Caco-2 (cell line): ENCODE measurements at regions of chr11 and their contacts with region 1.

Region 1: GRCh38 chr11:94623120-94623735 is 56.1 kb downstream of the PIWIL4 start:
- DNase-seq: peak; percentile 87 to 92
- H3K4me3 ChIP-seq: no peak overlapping the region
- H3K4me3 Mint-ChIP-seq: no peak overlapping the region
- H3K27ac Mint-ChIP-seq: no peak overlapping the region
- H3K4me1 ChIP-seq: no peaks in the 10 kb centered on the region
- H3K4me1 Mint-ChIP-seq: no peaks in the 10 kb centered on the region
- H3K27me3 ChIP-seq: no peaks in the 10 kb centered on the region
- H3K27me3 Mint-ChIP-seq: no peaks in the 10 kb centered on the region
- CTCF ChIP-seq: peak; percentile 99

Region 2: GRCh38 chr11:94077552-94078293 is 545.5 kb before region 1 on chr11:
- CTCF ChIA-PET with region 1: no interaction called
- POLR2A ChIA-PET with region 1: no interaction called
- intact Hi-C with region 1: no loop called
- DNase-seq: no peak
- H3K4me3 ChIP-seq: no peak overlapping the region
- H3K4me3 Mint-ChIP-seq: no peak overlapping the region
- H3K27ac Mint-ChIP-seq: no peak overlapping the region
- H3K4me1 ChIP-seq: peaks cover 15% of the 10 kb centered on the region
- H3K4me1 Mint-ChIP-seq: peaks cover 11% of the 10 kb centered on the region
- H3K27me3 ChIP-seq: no peaks in the 10 kb centered on the region
- H3K27me3 Mint-ChIP-seq: no peaks in the 10 kb centered on the region
- CTCF ChIP-seq: no peak

Region 3: DNA sequence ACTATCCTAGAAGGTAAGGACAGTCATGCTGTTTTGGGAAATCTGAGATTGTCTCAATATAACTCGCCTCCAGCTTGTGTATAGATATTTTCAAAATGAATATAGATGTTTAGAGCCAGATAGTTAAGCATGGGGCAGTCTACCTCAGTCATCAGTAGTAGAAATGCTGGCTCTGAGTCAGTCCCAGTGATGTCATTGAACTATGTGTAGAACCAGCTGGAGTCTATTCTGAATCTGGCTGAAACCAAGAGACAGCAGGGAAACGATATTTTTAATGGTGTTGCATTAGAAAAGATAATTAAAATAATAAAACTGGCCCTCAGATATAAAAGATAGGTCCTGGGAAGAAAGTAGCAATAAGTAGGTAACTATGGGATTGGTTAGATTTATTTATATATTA is 30.2 kb before region 1 on chr11:
- CTCF ChIA-PET with region 1: no interaction called
- POLR2A ChIA-PET with region 1: no interaction called
- intact Hi-C with region 1: no loop called
- DNase-seq: no peak
- H3K4me3 ChIP-seq: no peak overlapping the region
- H3K4me3 Mint-ChIP-seq: no peak overlapping the region
- H3K27ac Mint-ChIP-seq: no peak overlapping the region
- H3K4me1 ChIP-seq: peaks cover 22% of the 10 kb centered on the region
- H3K4me1 Mint-ChIP-seq: peaks cover 30% of the 10 kb centered on the region
- H3K27me3 ChIP-seq: no peaks in the 10 kb centered on the region
- H3K27me3 Mint-ChIP-seq: no peaks in the 10 kb centered on the region
- CTCF ChIP-seq: no peak

Region 4: DNA sequence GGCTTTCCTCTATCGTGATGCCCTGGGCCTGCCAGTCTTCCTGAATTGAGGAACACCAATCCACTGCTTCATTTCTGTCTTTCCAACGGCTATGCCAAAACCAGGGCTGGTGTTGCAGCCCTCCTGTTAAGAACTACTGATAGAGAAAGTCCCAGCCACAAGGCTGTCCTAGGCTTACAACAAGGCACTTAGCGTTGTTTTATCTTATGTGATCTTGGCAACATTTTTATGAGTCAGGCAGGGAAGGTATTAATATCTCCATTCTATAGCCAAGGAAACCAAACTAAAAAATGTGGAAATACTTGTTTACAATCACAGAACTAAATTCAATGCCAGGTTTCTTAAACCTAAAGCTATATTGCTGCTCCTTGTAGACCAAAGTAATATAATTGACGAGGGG is 55.0 kb after region 1 on chr11:
- CTCF ChIA-PET with region 1: interaction called, 10 read pairs
- POLR2A ChIA-PET with region 1: no interaction called
- intact Hi-C with region 1: no loop called
- DNase-seq: no peak
- H3K4me3 ChIP-seq: no peak overlapping the region
- H3K4me3 Mint-ChIP-seq: no peak overlapping the region
- H3K27ac Mint-ChIP-seq: peak overlapping the region; percentile 28
- H3K4me1 ChIP-seq: peaks cover 47% of the 10 kb centered on the region
- H3K4me1 Mint-ChIP-seq: peaks cover 43% of the 10 kb centered on the region
- H3K27me3 ChIP-seq: no peaks in the 10 kb centered on the region
- H3K27me3 Mint-ChIP-seq: no peaks in the 10 kb centered on the region
- CTCF ChIP-seq: no peak

Region 5: GRCh38 chr11:94747146-94748080 is 124.2 kb after region 1 on chr11:
- CTCF ChIA-PET with region 1: interaction called, 18 read pairs
- POLR2A ChIA-PET with region 1: no interaction called
- intact Hi-C with region 1: loop called (anchors 1 kb)
- DNase-seq: peak; percentile 61 to 83
- H3K4me3 ChIP-seq: no peak overlapping the region
- H3K4me3 Mint-ChIP-seq: peak overlapping the region; percentile 30
- H3K27ac Mint-ChIP-seq: peak overlapping the region; percentile 45
- H3K4me1 ChIP-seq: peaks cover 51% of the 10 kb centered on the region
- H3K4me1 Mint-ChIP-seq: peaks cover 47% of the 10 kb centered on the region
- H3K27me3 ChIP-seq: no peaks in the 10 kb centered on the region
- H3K27me3 Mint-ChIP-seq: no peaks in the 10 kb centered on the region
- CTCF ChIP-seq: no peak

Region 6: GRCh38 chr11:94804874-94805273 is 181.6 kb after region 1 on chr11:
- CTCF ChIA-PET with region 1: interaction called, 3 read pairs
- POLR2A ChIA-PET with region 1: no interaction called
- intact Hi-C with region 1: loop called (anchors 1 kb)
- DNase-seq: no peak
- H3K4me3 ChIP-seq: no peak overlapping the region
- H3K4me3 Mint-ChIP-seq: no peak overlapping the region
- H3K27ac Mint-ChIP-seq: no peak overlapping the region
- H3K4me1 ChIP-seq: 0 out of 2 replicates have a peak, but pooled peaks cover 3% of the 10 kb centered on the region
- H3K4me1 Mint-ChIP-seq: no peaks in the 10 kb centered on the region
- H3K27me3 ChIP-seq: no peaks in the 10 kb centered on the region
- H3K27me3 Mint-ChIP-seq: no peaks in the 10 kb centered on the region
- CTCF ChIP-seq: no peak

Region 7: DNA sequence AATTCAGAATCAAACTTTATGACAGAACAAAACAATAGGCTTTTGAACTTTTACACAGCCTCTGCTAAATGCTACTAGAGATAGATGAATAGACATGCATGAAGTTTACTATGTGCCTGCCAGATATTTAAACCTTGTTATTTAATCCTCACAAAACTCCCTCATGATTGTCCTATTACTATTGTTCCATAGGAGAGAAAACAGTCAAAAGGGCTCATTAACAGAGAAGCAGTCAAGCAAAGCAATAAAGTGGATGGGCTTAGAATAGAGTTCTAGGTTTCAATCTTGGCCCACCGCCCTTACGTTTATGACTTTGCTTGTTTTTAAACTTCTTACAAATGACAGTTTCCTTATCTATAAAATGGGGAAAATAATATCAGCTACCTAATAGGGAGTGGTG is 337.3 kb after region 1 on chr11:
- CTCF ChIA-PET with region 1: interaction called, 8 read pairs
- POLR2A ChIA-PET with region 1: no interaction called
- intact Hi-C with region 1: loop called (anchors 2 kb)
- DNase-seq: no peak
- H3K4me3 ChIP-seq: no peak overlapping the region
- H3K4me3 Mint-ChIP-seq: no peak overlapping the region
- H3K27ac Mint-ChIP-seq: no peak overlapping the region
- H3K4me1 ChIP-seq: no peaks in the 10 kb centered on the region
- H3K4me1 Mint-ChIP-seq: no peaks in the 10 kb centered on the region
- H3K27me3 ChIP-seq: no peaks in the 10 kb centered on the region
- H3K27me3 Mint-ChIP-seq: no peaks in the 10 kb centered on the region
- CTCF ChIP-seq: no peak

Region 8: DNA sequence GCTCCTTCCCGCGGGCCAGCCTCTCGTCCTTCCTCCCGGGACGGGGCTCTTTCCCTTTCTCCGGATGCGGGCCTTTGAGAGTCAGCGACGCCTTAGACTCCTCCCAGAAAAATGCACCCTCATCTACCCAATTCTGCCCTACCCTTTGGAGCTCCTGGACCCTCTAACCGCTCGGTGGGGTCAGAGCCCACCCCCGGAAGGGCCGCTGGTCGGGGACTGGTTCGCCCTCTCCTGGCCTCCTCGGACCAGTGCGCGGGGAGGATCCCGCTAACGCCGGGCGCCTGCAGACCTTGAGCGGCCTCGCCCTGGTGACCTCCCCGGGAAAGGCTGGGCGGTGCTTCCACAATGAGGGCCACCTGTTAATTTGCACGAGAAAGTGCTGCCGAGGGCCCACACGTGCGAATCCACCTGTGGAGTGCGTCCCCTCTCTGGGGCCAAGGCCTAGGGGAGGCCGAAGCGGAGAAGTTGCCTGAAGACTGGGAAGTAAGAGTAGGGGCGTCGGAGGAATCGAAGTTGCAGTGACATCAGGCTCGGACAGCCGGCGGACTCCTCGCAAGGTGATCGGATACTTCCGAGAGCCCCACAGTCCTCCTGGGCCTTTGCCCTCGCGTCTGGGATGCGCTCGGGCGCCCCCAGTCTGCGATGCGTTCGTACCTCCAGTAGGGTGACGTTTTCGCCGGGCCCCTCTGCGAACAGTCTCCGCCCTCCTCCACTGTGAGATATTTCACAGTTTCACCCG is 527.9 kb after region 1 on chr11:
- CTCF ChIA-PET with region 1: interaction called, 4 read pairs
- POLR2A ChIA-PET with region 1: no interaction called
- intact Hi-C with region 1: loop called (anchors 1 kb)
- DNase-seq: peak; percentile 98 to 99
- H3K4me3 ChIP-seq: peak overlapping the region; percentile 51
- H3K4me3 Mint-ChIP-seq: peak overlapping the region; percentile 93
- H3K27ac Mint-ChIP-seq: peak overlapping the region; percentile 94
- H3K4me1 ChIP-seq: peaks cover 14% of the 10 kb centered on the region
- H3K4me1 Mint-ChIP-seq: peaks cover 20% of the 10 kb centered on the region
- H3K27me3 ChIP-seq: no peaks in the 10 kb centered on the region
- H3K27me3 Mint-ChIP-seq: no peaks in the 10 kb centered on the region
- CTCF ChIP-seq: peak; percentile 96 to 97